ENCODE measurements at regions of chr9 and their contacts with region 1.

Region 1: GRCh38 chr9:130870491-130871381 is 25.9 kb downstream of the QRFP start:
- DNase-seq: no peak
- H3K4me3 ChIP-seq: peak overlapping the region; percentile 9
- H3K27ac ChIP-seq: peak overlapping the region; percentile 91
- H3K4me1 ChIP-seq: peaks cover 76% of the 10 kb centered on the region
- H3K27me3 ChIP-seq: no peaks in the 10 kb centered on the region
- CTCF ChIP-seq: no peak

Region 2: DNA sequence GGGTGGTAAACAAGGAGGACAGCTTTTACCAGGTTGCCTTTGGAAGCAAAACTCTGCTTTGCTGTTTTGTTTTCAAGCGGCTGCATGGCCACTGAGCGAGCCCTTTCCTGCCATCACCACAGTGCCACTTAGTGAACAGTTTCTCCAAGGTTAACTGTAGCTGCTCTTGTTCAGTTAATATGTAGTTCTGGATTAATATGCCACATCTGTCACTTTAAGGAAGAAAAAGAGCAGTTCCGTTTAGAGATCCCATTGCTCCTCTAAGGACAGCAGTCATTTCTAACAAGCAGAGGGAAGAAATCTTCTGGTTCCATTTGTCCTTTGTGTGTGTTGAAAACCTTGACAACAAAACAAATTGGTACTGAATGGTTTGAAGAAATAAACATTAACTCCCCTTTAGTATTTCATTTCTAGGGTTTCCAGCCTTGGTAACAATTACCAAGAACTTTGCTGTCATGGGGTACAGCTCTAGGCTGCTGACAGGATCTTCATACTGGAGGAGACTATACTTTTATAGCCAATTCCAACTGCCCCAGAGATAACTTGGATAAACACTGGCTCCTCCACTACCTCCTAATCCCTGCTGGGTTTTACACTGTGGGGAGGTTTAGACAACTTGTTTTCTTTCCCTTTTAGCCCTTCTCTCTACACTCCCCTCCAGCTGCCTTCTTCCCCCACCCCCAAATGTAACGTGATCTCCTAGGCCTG is 45.9 kb before region 1 on chr9:
- intact Hi-C with region 1: no loop called
- DNase-seq: no peak
- H3K4me3 ChIP-seq: peak overlapping the region; percentile 1
- H3K27ac ChIP-seq: peak overlapping the region; percentile 82
- H3K4me1 ChIP-seq: peaks cover 33% of the 10 kb centered on the region
- H3K27me3 ChIP-seq: no peaks in the 10 kb centered on the region
- CTCF ChIP-seq: no peak

Region 3: GRCh38 chr9:130912932-130913598 is 42.3 kb after region 1 on chr9:
- intact Hi-C with region 1: no loop called
- DNase-seq: no peak
- H3K4me3 ChIP-seq: no peak overlapping the region
- H3K27ac ChIP-seq: no peak overlapping the region
- H3K4me1 ChIP-seq: no peaks in the 10 kb centered on the region
- H3K27me3 ChIP-seq: peaks cover 40% of the 10 kb centered on the region
- CTCF ChIP-seq: no peak

Region 4: GRCh38 chr9:130940693-130941576 is 70.2 kb after region 1 on chr9:
- intact Hi-C with region 1: loop called (anchors 10 kb)
- DNase-seq: peak; percentile 62
- H3K4me3 ChIP-seq: no peak overlapping the region
- H3K27ac ChIP-seq: no peak overlapping the region
- H3K4me1 ChIP-seq: peaks cover 32% of the 10 kb centered on the region
- H3K27me3 ChIP-seq: peaks cover 77% of the 10 kb centered on the region
- CTCF ChIP-seq: peak; percentile 88

Measured in left ventricle myocardium inferior (tissue), 1 donor.